MCF 10A (cell line): ENCODE measurements at regions of chr11 and their contacts with region 1.

Region 1: DNA sequence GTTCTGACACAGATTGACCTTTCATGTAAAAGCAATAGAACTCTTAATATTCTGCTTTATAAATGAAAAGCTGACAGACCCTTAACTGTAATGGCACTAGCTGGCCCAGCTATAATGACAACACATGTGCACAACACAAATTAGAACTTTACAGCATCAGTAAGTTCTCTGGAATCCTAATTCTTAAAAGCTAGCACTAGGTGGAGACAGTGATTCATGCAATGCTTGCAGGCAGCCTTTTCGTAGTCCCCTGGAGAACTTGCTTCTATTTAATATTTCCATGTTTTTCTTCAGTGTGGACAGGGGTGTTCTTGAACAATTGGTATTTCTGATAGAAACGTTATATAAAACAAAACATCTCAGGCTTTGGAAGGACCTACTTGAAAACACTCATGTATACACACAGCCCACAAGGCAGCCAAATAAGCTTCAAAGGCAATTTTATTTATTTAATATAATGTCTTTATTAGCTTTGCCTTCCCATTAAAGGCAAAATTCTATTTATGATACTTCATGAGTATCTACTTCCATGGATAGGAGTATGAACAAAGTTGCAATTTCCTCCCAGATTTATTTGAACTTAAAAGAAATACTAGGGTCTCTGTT is 374.3 kb upstream of the MPPED2 start:
- DNase-seq: peak; percentile 30
- H3K4me3 Mint-ChIP-seq: no peak overlapping the region
- H3K27ac Mint-ChIP-seq: no peak overlapping the region
- H3K4me1 Mint-ChIP-seq: no peaks in the 10 kb centered on the region
- H3K27me3 Mint-ChIP-seq: peaks cover 21% of the 10 kb centered on the region
- CTCF ChIP-seq: peak; percentile 56

Region 2: DNA sequence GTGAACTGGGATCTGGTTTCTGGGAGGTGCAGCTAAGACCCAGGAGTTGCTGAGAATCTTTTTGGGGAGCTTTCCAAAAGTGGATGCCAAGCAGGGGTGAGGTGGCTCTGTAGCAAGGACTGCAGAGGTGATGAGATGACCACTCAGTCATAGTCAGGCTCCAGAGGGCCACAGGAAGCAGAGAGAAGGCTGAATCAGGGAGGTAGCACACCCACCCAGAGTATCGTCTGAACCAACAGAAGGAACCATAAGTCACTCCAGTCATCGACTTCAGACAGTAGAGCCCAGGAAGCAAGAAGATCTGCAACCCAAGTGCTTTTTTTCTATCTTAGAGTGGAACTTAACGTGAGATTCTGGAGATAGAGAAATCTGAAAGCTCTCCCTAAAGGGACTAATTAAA is 38.7 kb before region 1 on chr11:
- CTCF ChIA-PET with region 1: no interaction called
- POLR2A ChIA-PET with region 1: no interaction called
- intact Hi-C with region 1: no loop called
- DNase-seq: no peak
- H3K4me3 Mint-ChIP-seq: no peak overlapping the region
- H3K27ac Mint-ChIP-seq: no peak overlapping the region
- H3K4me1 Mint-ChIP-seq: no peaks in the 10 kb centered on the region
- H3K27me3 Mint-ChIP-seq: peaks cover 82% of the 10 kb centered on the region
- CTCF ChIP-seq: no peak

Region 3: DNA sequence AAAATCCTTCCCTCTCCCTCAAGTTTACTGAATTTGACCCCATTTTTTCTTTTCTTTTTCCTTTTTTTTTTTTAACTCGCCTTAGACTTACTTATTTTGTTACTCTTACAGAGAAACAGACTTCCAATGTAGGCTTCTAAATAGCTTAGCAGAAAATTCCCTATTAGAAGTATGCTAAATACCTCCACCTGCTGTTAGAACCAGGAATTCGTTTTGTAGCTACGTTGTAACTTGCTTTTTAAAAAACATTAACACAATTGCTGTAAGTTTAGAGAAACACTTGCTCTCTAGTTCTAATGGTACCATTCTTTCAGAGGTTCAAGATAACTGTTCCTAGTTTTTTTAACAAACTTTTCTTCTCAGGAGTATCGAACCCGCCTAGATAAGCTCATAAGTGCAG is 84.8 kb after region 1 on chr11:
- CTCF ChIA-PET with region 1: interaction called, 3 read pairs
- POLR2A ChIA-PET with region 1: no interaction called
- intact Hi-C with region 1: loop called (anchors 1 kb)
- DNase-seq: peak; percentile 24
- H3K4me3 Mint-ChIP-seq: no peak overlapping the region
- H3K27ac Mint-ChIP-seq: no peak overlapping the region
- H3K4me1 Mint-ChIP-seq: no peaks in the 10 kb centered on the region
- H3K27me3 Mint-ChIP-seq: peaks cover 40% of the 10 kb centered on the region
- CTCF ChIP-seq: no peak

Region 4: GRCh38 chr11:31233424-31233823 is 272.9 kb after region 1 on chr11:
- CTCF ChIA-PET with region 1: interaction called, 4 read pairs
- POLR2A ChIA-PET with region 1: no interaction called
- intact Hi-C with region 1: loop called (anchors 1 kb)
- DNase-seq: peak; percentile 19
- H3K4me3 Mint-ChIP-seq: no peak overlapping the region
- H3K27ac Mint-ChIP-seq: no peak overlapping the region
- H3K4me1 Mint-ChIP-seq: peaks cover 4% of the 10 kb centered on the region
- H3K27me3 Mint-ChIP-seq: no peaks in the 10 kb centered on the region
- CTCF ChIP-seq: peak; percentile 43